Calu3 (cell line): ENCODE measurements at regions of chr5 and their contacts with region 1.

Region 1: DNA sequence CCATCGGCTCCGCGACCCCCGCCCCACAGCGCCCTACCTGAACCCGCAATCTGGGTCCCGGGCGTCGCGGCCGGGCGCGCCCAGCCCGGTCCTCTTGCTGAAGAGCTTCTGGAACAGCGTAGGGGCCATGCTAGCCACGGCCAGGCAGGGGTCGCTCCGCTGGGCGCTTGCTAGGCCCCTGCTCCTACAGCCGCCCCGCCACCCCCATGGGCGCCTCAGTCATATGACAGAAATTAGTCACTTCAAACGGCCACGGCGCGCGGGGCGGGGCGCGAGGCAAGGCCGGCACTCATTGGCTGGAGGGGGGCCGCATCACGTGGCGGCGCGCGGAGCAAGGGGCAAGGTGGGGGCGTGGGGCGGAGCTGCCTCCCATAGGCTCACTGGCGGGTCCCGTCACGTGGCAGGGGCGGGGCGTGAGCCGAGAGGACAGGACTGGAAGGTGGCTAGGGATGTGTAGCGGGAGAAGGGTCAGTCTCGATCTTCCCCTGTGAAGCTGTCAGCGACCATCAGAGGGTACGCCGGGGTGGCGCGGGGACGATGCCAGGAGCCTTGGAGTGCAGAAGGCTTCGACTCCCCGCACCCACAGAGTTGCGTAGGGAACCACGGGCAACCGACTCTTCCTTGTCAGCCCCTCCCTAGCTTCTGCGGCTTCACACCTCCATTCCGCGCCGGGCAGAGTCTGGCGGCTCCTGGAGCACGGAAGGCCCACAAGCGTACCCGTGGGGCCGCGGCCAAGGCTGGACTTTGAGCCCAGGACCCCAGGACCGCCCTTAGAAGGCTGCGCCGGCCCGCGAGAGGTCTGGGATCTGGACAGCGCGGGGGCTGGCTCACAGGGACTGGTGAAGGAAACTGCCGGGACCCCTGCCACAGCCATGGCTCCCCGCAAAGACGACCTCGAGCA is at the start of gene FNIP1:
- DNase-seq: peak; percentile 100
- H3K4me3 Mint-ChIP-seq: peak within 1 kb of the TSS; percentile 95
- H3K27ac Mint-ChIP-seq: peak within 1 kb of the TSS; percentile 94
- H3K4me1 Mint-ChIP-seq: peaks cover 9% of the 10 kb centered on the region
- H3K27me3 Mint-ChIP-seq: no peaks in the 10 kb centered on the region
- CTCF ChIP-seq: no peak
- total RNA-seq, gene FNIP1: 46.0 and 46.5 TPM in 2 replicates

Region 2: GRCh38 chr5:131589510-131590348 is 207.3 kb before region 1 on chr5:
- CTCF ChIA-PET with region 1: no interaction called
- intact Hi-C with region 1: loop called (anchors 5 kb)
- DNase-seq: peak; percentile 30
- H3K4me3 Mint-ChIP-seq: no peak overlapping the region
- H3K27ac Mint-ChIP-seq: no peak overlapping the region
- H3K4me1 Mint-ChIP-seq: peaks cover 24% of the 10 kb centered on the region
- H3K27me3 Mint-ChIP-seq: no peaks in the 10 kb centered on the region
- CTCF ChIP-seq: peak; percentile 86

Region 3: DNA sequence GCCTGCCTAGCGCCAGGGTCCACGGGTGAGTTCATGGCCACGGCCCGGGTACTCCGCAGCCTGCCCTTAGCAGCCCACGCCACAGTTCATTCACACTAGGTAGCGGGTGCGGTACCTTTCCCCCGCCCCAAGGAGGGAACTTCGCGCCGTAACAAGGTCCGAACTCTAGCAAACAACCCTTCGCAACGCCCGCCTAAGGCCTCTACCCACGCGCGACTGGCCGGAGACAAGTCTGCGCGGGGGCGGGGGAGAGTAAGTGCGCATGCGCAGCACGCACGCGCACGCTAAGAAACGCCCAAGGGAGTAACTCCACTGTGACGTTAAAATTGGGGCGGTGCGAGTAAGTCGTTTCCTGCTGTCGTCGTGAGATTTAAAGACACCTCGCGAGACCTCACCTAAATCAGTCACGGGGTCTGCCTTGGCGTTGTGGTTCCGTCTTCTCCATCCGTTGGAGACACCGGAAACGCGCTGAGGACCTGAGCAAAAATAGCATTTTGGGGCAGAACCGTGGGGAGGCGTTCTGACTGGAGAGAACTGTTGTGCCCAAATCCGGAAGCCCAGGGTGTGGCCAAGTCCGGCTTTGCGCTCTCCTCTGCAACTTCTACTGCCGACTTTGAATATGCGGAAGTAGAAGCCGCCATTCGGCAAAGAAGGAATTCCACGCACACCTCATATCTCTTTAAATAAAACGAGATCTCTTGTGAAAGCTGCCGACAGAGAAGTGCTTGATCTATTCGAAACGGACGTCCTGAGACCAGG is 161.9 kb before region 1 on chr5 and contains the start of gene RAPGEF6:
- CTCF ChIA-PET with region 1: no interaction called
- intact Hi-C with region 1: loop called (anchors 5 kb)
- DNase-seq: peak; percentile 97
- H3K4me3 Mint-ChIP-seq: no peak within 1 kb of the TSS
- H3K27ac Mint-ChIP-seq: peak within 1 kb of the TSS; percentile 94
- H3K4me1 Mint-ChIP-seq: no peaks in the 10 kb centered on the region
- H3K27me3 Mint-ChIP-seq: no peaks in the 10 kb centered on the region
- CTCF ChIP-seq: peak; percentile 21
- total RNA-seq, gene RAPGEF6: 21.6 and 27.3 TPM in 2 replicates